ENCODE measurements at regions of chr2 and their contacts with region 1.

Region 1: GRCh38 chr2:230798769-230799399 is 65.9 kb upstream of the ITM2C start:
- DNase-seq: peak; percentile 80
- H3K4me3 Mint-ChIP-seq: no peak overlapping the region
- H3K27ac Mint-ChIP-seq: peak overlapping the region; percentile 43
- H3K4me1 Mint-ChIP-seq: peaks cover 32% of the 10 kb centered on the region
- H3K27me3 Mint-ChIP-seq: no peaks in the 10 kb centered on the region

Region 2: GRCh38 chr2:230700447-230700846 is 98.4 kb before region 1 on chr2:
- CTCF ChIA-PET with region 1: no interaction called
- POLR2A ChIA-PET with region 1: no interaction called
- DNase-seq: no peak
- H3K4me3 Mint-ChIP-seq: no peak overlapping the region
- H3K27ac Mint-ChIP-seq: no peak overlapping the region
- H3K4me1 Mint-ChIP-seq: peaks cover 20% of the 10 kb centered on the region
- H3K27me3 Mint-ChIP-seq: no peaks in the 10 kb centered on the region

Region 3: DNA sequence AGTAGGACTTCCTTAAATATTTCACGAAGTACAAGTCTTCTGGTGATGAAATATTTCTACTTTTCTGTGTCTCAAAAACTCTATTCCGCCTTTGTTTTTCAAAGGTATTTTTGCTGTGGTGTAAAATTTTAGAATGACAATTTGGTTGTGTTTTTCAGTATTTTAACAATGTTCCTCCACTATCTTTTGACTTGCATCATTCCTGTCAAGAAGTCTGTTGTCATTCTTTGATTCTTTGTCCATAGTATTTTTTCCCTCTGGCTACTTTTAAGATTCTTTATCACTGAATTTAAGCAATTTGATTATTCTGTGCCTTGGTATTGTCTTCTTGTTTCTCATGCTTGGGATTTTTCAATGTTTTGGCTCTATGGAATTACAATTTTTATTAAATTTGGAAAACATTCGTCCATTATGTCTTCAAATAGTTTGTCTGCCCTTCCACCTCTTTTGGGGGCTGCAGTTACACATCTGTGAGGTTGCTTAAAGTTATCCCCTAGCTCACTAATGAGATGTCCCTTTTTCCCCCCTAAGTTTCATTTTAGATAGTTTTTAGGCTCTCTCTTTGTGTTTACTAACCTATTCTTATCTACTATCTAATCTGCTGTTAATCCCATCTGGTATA is 10.2 kb before region 1 on chr2:
- CTCF ChIA-PET with region 1: interaction called, 33 read pairs
- POLR2A ChIA-PET with region 1: no interaction called
- DNase-seq: no peak
- H3K4me3 Mint-ChIP-seq: no peak overlapping the region
- H3K27ac Mint-ChIP-seq: no peak overlapping the region
- H3K4me1 Mint-ChIP-seq: peaks cover 53% of the 10 kb centered on the region
- H3K27me3 Mint-ChIP-seq: no peaks in the 10 kb centered on the region

Measured in activated CD4-positive, alpha-beta T cell treated with anti-CD3 and anti-CD28 coated beads, Interleukin-2, amount 10 ng/mL, durations not matched to agents 7 days and 5 days (primary cell).